Mammary epithelial cell (primary cell): ENCODE measurements at regions of chr15 and their contacts with region 1.

Region 1: DNA sequence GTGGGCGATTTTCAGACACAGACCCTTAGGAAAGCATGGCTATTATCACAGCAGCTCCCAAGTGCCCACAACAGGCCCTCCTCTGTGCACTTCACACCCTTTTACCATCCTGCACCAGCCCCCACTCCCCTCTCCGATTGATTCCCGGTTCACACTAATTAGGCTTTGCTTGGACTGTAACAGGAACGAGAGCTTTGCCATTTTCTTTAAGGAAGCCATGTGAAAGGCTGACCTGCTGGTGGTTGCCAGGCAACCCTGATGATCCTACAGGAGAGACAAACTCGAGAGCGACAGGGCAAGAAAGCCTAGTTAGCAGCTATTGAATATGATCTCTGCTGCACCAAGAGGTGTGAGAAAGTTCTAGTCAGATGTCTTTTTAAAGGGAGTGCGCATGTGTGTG is 28.2 kb upstream of the DET1 start:
- DNase-seq: no peak
- H3K4me3 ChIP-seq: no peak overlapping the region
- H3K27ac ChIP-seq: no peak overlapping the region
- H3K4me1 ChIP-seq: no peaks in the 10 kb centered on the region
- H3K27me3 ChIP-seq: no peaks in the 10 kb centered on the region
- CTCF ChIP-seq: no peak

Region 2: DNA sequence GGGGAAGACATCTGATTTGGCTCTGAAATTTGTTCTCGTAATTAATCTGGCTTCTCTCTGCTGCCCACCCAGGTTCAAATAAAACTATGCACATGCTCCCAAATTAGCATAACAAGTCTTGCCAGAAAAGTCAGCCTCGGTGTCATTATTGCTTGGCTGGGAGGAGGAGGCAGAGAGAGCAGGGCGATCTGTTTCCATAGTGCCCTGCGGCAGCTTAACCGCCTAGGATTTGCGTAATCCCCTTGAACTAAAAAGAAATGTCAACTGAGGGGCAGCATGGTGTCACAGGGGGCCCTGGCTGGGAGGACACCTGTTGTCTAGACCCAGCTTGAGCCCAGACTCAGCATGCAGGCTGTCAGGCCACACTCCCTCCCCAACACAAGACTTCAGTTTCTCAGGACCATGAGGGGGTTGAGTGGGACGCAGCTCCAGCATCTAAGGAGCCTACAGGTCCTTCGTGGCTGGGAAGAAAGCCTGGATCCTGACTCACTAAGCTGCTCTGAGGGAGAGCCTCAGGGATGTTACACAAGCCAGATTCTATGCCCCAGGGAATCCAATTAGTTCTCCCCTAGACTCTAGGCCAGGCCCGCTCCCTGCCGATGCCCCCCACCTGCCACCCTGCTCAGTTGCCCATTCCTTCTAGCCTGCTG is 89.8 kb before region 1 on chr15:
- CTCF ChIA-PET with region 1: no interaction called
- dilution Hi-C with region 1: no loop called
- in situ Hi-C with region 1: no loop called
- intact Hi-C with region 1: no loop called
- DNase-seq: no peak
- H3K4me3 ChIP-seq: no peak overlapping the region
- H3K27ac ChIP-seq: no peak overlapping the region
- H3K4me1 ChIP-seq: no peaks in the 10 kb centered on the region
- H3K27me3 ChIP-seq: no peaks in the 10 kb centered on the region
- CTCF ChIP-seq: no peak

Region 3: GRCh38 chr15:88509964-88510363 is 64.7 kb before region 1 on chr15:
- CTCF ChIA-PET with region 1: no interaction called
- dilution Hi-C with region 1: loop called (anchors 5 kb)
- in situ Hi-C with region 1: no loop called
- intact Hi-C with region 1: no loop called
- DNase-seq: no peak
- H3K4me3 ChIP-seq: no peak overlapping the region
- H3K27ac ChIP-seq: no peak overlapping the region
- H3K4me1 ChIP-seq: no peaks in the 10 kb centered on the region
- H3K27me3 ChIP-seq: no peaks in the 10 kb centered on the region
- CTCF ChIP-seq: no peak

Region 4: DNA sequence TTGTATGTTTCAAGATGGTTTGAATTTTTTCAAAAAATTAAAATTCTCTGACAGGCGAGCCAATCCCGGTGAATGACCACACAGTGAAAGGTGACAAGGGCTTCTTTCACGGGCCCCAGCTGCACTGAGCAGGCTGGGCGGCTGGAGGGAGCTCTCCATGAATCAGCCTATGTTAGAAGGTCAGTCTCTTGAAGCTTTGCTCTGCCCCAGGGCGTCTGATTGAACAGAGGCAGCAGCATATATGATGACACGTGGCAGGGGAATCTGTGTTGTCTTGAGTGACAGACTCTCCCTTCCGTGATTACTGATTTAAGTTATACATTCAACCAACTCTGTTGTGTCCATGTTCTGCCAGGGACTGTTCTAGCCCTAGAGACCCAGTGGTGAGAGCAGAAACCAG is 115.7 kb after region 1 on chr15:
- CTCF ChIA-PET with region 1: no interaction called
- dilution Hi-C with region 1: loop called (anchors 10 kb)
- in situ Hi-C with region 1: no loop called
- intact Hi-C with region 1: no loop called
- DNase-seq: peak; percentile 18
- H3K4me3 ChIP-seq: no peak overlapping the region
- H3K27ac ChIP-seq: no peak overlapping the region
- H3K4me1 ChIP-seq: no peaks in the 10 kb centered on the region
- H3K27me3 ChIP-seq: peaks cover 1% of the 10 kb centered on the region
- CTCF ChIP-seq: no peak